Endothelial cell of umbilical vein (primary cell): ENCODE measurements at regions of chr15 and their contacts with region 1.

Region 1: GRCh38 chr15:32855942-32856341 is 138.1 kb downstream of the GREM1 start:
- DNase-seq: peak; percentile 94
- H3K4me3 ChIP-seq: no peak overlapping the region
- H3K27ac ChIP-seq: peak overlapping the region; percentile 85
- H3K4me1 ChIP-seq: peaks cover 34% of the 10 kb centered on the region
- H3K27me3 ChIP-seq: no peaks in the 10 kb centered on the region
- CTCF ChIP-seq: no peak
- POLR2A ChIP-seq: peak; percentile 28

Region 2: DNA sequence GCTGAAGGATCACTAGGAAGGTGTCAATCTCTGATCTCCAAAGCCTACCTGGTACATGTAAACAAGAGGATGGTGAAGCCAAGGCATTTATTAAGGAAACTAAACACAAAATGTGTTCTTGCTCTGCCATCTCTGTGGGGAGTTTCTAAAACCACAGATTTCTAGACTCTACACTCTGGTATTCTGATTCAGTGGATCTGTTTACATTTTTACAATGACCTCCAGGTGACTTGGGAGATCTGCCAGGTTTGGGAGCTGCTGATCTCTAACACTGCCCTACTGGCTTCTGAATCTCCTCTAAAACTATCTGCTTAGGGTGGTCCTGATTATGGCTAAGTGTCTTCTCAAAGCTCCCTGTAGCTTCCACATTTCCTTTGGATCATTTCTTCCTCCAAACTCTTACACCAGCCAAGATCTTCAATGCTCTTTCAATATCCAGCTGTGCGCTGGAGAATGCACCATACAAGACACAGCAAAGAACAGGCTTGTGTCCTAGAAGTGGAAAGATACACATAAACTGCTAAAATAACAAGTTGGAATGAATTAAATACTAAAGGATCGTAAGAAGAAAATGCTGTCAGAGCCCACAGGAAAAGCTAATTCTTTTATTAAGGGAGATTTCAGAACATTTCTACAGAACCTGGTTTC is 65.5 kb before region 1 on chr15:
- CTCF ChIA-PET with region 1: no interaction called
- POLR2A ChIA-PET with region 1: no interaction called
- dilution Hi-C with region 1: no loop called
- intact Hi-C with region 1: loop called (anchors 5 kb)
- DNase-seq: no peak
- H3K4me3 ChIP-seq: no peak overlapping the region
- H3K27ac ChIP-seq: no peak overlapping the region
- H3K4me1 ChIP-seq: peaks cover 10% of the 10 kb centered on the region
- H3K27me3 ChIP-seq: no peaks in the 10 kb centered on the region
- CTCF ChIP-seq: no peak
- POLR2A ChIP-seq: no peak

Region 3: GRCh38 chr15:32824777-32825176 is 31.2 kb before region 1 on chr15:
- CTCF ChIA-PET with region 1: interaction called, 6 read pairs
- POLR2A ChIA-PET with region 1: no interaction called
- dilution Hi-C with region 1: no loop called
- intact Hi-C with region 1: loop called (anchors 1 kb)
- DNase-seq: peak; percentile 61
- H3K4me3 ChIP-seq: no peak overlapping the region
- H3K27ac ChIP-seq: peak overlapping the region; percentile 88
- H3K4me1 ChIP-seq: peaks cover 30% of the 10 kb centered on the region
- H3K27me3 ChIP-seq: no peaks in the 10 kb centered on the region
- CTCF ChIP-seq: no peak
- POLR2A ChIP-seq: no peak

Region 4: GRCh38 chr15:32877252-32878019 is 21.5 kb after region 1 on chr15:
- CTCF ChIA-PET with region 1: interaction called, 4 read pairs
- POLR2A ChIA-PET with region 1: no interaction called
- dilution Hi-C with region 1: no loop called
- intact Hi-C with region 1: loop called (anchors 1 kb)
- DNase-seq: peak; percentile 62
- H3K4me3 ChIP-seq: no peak overlapping the region
- H3K27ac ChIP-seq: no peak overlapping the region
- H3K4me1 ChIP-seq: peaks cover 15% of the 10 kb centered on the region
- H3K27me3 ChIP-seq: no peaks in the 10 kb centered on the region
- CTCF ChIP-seq: no peak
- POLR2A ChIP-seq: no peak